PC-3 (cell line): ENCODE measurements at regions of chr17 and their contacts with region 1.

Region 1: GRCh38 chr17:74748529-74749365 is at the start of gene NHERF1:
- DNase-seq: peak; percentile 98
- ATAC-seq: peak; percentile 90
- H3K4me3 ChIP-seq: peak within 1 kb of the TSS; percentile 78
- H3K27ac ChIP-seq: no peak within 1 kb of the TSS
- H3K4me1 ChIP-seq: peaks cover 27% of the 10 kb centered on the region
- H3K27me3 ChIP-seq: no peaks in the 10 kb centered on the region
- CTCF ChIP-seq: no peak; the same call in 1 of the 2 replicates
- total RNA-seq, gene NHERF1: 75.0 and 116 TPM in 2 replicates

Region 2: GRCh38 chr17:74659898-74660297 is 88.8 kb before region 1 on chr17:
- CTCF ChIA-PET with region 1: interaction called, 8 read pairs
- POLR2A ChIA-PET with region 1: interaction called, 14 read pairs
- intact Hi-C with region 1: loop called (anchors 2 kb)
- DNase-seq: no peak
- ATAC-seq: no peak
- H3K4me3 ChIP-seq: no peak overlapping the region
- H3K27ac ChIP-seq: no peak overlapping the region
- H3K4me1 ChIP-seq: no peaks in the 10 kb centered on the region
- H3K27me3 ChIP-seq: peaks cover 76% of the 10 kb centered on the region
- CTCF ChIP-seq: no peak

Region 3: DNA sequence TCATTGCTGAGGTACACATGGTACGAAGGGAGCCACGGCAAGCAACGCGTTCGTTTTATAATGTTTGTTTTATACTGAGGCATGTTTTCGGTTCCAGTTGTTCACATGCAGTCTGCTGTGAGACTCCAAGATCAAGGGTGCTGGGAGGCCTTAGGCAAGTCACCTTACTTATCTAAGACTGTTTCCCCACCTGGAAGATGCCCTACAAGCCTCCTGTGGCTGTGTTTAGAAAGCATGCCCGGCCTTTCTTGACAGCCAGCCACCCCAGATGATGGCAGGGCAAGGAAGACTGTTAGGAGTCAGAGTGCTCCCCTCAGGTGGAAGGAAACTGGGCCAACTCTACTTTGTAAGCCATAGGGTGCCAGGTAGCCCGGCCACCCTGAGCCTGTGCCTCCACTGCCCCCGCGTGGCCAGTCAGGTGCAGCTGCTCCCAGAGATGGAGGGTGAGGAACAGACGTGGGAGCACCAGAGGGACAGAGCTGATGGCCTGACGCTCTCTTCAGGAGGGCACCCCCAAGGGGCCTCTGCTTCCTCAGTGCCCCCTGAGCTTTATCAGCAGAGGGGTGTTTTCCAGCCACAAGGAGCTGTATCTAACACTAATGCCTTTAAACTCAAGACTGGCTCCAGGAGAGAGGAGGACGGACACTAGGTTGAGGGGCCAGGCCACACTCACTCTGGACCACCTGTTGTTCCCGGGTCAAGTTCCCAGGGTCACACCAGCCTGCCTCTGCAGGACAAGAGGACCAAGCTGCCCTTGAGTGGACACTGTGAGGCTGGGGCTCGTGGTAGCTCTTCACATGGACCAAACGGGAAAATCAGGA is 22.0 kb after region 1 on chr17:
- CTCF ChIA-PET with region 1: interaction called, 29 read pairs
- POLR2A ChIA-PET with region 1: no interaction called
- intact Hi-C with region 1: loop called (anchors 1 kb)
- DNase-seq: peak; percentile 75
- ATAC-seq: peak; percentile 82
- H3K4me3 ChIP-seq: no peak overlapping the region
- H3K27ac ChIP-seq: no peak overlapping the region
- H3K4me1 ChIP-seq: peaks cover 6% of the 10 kb centered on the region
- H3K27me3 ChIP-seq: no peaks in the 10 kb centered on the region
- CTCF ChIP-seq: peak; percentile 93

Region 4: GRCh38 chr17:74776044-74776977 is 27.6 kb after region 1 on chr17 and contains the start of gene NAT9:
- CTCF ChIA-PET with region 1: interaction called, 29 read pairs
- POLR2A ChIA-PET with region 1: no interaction called
- intact Hi-C with region 1: loop called (anchors 2 kb)
- DNase-seq: peak; percentile 99
- ATAC-seq: peak; percentile 86
- H3K4me3 ChIP-seq: peak within 1 kb of the TSS; percentile 83
- H3K27ac ChIP-seq: peak within 1 kb of the TSS; percentile 53
- H3K4me1 ChIP-seq: peaks cover 20% of the 10 kb centered on the region
- H3K27me3 ChIP-seq: no peaks in the 10 kb centered on the region
- CTCF ChIP-seq: no peak
- total RNA-seq, gene NAT9: 47.2 and 55.4 TPM in 2 replicates